Dorsolateral prefrontal cortex (tissue), 120 donors: ENCODE measurements at regions of chr3 and their contacts with region 1.

Region 1: DNA sequence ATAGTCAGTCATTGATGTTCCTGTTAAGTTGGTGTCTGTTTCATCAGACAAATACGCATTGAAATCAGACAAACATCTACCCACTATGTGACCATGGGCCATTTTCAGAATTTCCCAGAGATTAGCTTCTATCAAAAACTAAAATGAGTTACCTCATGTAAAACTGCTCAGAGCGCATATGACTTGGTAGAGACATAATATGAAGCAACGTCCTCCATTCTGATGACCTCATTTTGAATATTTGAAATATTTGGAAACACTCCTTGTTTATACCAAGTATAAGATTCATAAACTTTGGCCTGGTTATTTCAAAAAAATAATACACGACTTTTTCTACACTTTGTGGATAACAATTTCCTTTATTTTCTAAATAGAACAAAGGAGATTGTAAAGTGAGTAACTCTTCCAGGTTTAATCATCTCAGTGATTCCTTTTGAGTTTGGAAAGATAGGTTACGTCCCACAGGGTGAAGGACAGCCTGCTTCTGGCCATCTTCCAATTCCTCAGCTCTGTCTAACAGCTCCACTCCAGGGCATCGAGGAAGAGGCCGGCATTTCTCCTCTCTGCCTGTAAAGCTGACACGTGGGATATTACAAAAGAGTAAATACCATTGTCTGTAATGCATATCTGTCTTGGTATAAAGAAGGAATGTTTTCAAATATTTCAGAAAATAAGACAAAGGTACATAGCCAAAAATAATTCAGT is 122.6 kb downstream of the CADM2 start:
- DNase-seq: peak in 5 of 10 donors; percentile 21 to 67 (median 39)
- H3K4me3 ChIP-seq: peak overlapping the region in 21 of 59 donors; percentile 1 to 51 (median 12)
- H3K27ac ChIP-seq: peak overlapping the region in 13 of 59 donors; percentile 16 to 75 (median 38)
- H3K27me3 ChIP-seq: no peaks in the 10 kb centered on the region
- CTCF ChIP-seq: peak in 3 of 56 donors; percentile 8 to 19 (median 17)

Region 2: DNA sequence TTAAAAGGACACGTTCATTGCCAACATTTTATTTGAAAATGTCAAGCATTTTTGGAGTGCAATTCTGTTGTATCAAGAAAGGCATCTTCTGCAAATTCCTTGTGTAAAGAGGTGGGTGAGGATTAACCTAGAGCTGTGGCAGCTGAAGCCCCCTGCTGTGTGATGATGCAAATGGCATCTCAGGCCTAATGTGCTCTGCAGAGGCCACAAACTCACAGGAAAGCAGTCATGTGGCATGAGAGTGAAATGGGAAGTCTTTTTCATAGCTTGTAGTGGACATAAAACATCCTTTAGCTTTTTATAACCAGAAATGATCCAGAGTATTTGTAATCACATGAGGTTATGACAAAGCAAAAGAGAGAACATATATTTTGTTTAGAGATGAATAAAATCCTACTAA is 116.2 kb before region 1 on chr3:
- intact Hi-C with region 1: loop called in 1 of 2 experiments (anchors 10 kb)
- DNase-seq: peak in 6 of 10 donors; percentile 30 to 83 (median 56)
- H3K4me3 ChIP-seq: peak overlapping the region in 45 of 59 donors; percentile 0 to 90 (median 33)
- H3K27ac ChIP-seq: peak overlapping the region in 48 of 59 donors; percentile 1 to 96 (median 65)
- H3K27me3 ChIP-seq: peaks cover 0 to 2% (median 0%) of the 10 kb centered on the region in 45 donors
- CTCF ChIP-seq: peak in 51 of 56 donors; percentile 16 to 67 (median 45)

Region 3: DNA sequence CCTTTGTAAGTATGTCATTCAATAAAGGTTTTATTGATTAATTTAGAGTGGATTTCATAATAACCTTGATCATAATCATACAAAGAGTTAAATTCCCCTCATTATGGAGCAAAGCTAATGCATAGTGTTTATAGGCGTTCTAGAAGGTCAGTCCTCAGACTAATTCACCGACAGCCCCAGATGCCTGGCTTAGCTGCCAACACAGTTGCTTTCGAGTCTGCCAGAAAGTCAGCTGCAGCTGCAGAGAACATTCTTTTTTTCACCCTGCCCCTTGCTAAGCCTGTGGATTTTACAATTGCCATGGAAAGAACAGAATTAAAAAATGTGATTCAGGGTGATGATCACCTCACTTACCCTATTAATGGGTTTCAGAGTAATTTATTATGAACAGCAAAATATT is 101.3 kb before region 1 on chr3:
- intact Hi-C with region 1: loop called in 1 of 2 experiments (anchors 10 kb)
- DNase-seq: peak in 8 of 10 donors; percentile 62 to 78 (median 72)
- H3K4me3 ChIP-seq: peak overlapping the region in 26 of 59 donors; percentile 2 to 33 (median 12)
- H3K27ac ChIP-seq: peak overlapping the region in 48 of 59 donors; percentile 8 to 84 (median 50)
- H3K27me3 ChIP-seq: no peaks in the 10 kb centered on the region
- CTCF ChIP-seq: peak in 7 of 56 donors; percentile 7 to 30 (median 11)

Region 4: GRCh38 chr3:85068911-85069310 is 12.4 kb before region 1 on chr3:
- intact Hi-C with region 1: no loop called
- DNase-seq: no peak
- H3K4me3 ChIP-seq: no peak overlapping the region
- H3K27ac ChIP-seq: no peak overlapping the region
- H3K27me3 ChIP-seq: no peaks in the 10 kb centered on the region
- CTCF ChIP-seq: no peak

Region 5: DNA sequence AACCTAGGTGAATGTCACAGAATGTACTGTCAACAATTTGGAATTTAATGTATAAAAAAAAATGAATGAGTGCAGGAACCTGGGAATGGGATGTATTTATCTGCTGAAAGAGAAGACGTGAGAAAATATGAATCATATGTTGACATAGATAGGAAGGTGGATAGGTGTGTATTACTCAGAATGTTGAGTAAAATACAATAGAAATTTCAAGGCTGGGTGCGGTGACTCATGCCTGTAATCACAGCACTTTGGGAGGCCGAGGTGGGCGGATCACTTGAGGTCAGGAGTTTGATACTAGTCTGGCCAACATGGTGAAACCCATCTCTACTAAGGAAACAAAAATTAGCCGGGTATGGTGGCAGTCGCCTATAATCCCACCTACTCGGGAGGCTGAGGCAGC is 80.2 kb after region 1 on chr3:
- intact Hi-C with region 1: no loop called
- DNase-seq: no peak
- H3K4me3 ChIP-seq: no peak overlapping the region
- H3K27ac ChIP-seq: peak overlapping the region in 3 of 59 donors; percentile 3 to 11 (median 4)
- H3K27me3 ChIP-seq: no peaks in the 10 kb centered on the region
- CTCF ChIP-seq: no peak